Endothelial cell of umbilical vein (primary cell): ENCODE measurements at regions of chr6 and their contacts with region 1.

Region 1: DNA sequence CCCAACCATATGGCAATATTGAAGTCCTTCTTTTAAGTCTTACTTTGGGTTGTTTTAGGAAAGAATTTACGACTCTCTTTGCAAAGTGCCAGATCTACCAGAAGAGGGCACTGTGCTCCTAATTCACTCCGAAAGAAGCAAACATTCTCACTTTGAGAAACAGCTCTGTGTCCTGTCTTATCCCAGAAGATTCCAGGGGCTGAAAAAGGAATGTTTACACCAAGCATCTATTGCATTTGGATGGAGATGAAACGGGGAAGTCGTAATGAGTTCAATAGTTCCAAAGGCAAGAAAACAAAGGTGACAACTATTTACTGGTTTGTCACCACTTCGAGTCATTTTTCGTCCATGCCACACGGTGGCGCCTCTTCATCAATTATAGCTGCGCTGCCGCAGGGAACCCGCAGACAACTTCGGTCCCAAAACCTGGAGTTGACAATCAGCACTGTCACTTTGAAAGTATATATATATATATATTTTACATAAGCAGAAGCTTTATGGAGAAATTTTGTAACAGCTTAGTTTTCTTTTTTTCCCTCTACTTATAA is 121.6 kb downstream of the MOXD1 start:
- DNase-seq: peak; percentile 86
- H3K4me3 ChIP-seq: peak overlapping the region; percentile 8 to 59 (median 15)
- H3K27ac ChIP-seq: no peak overlapping the region
- H3K4me1 ChIP-seq: no peaks in the 10 kb centered on the region
- H3K27me3 ChIP-seq: peaks cover 4 to 8% of the 10 kb centered on the region in 2 experiments
- CTCF ChIP-seq: peak; percentile 64 to 78
- POLR2A ChIP-seq: no peak

Region 2: DNA sequence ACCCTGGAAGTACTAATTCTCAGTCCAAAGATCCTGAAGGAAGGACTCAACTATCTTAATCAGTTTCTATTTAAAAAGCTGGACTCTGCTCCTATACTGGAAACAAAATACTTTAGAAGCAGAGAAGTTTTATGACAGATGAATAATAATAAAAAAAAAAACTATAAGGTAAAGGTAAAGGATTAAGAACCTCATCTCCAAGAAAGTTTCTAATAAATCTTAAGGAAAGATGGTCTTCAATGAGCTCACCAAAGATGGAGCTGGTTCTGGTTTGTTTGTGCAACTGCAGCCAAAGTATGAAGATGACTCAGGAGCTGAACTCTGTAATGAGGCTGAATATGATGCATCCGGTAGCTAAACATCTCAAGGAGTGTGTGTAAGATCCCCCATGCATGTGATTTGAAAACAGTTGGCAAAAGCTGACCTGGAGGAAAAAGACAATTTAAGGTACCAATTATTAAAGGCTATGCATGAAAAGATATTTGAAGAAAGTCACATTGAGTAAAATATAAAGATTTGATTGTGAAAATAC is 676.8 kb before region 1 on chr6:
- CTCF ChIA-PET with region 1: no interaction called
- POLR2A ChIA-PET with region 1: no interaction called
- dilution Hi-C with region 1: no loop called
- intact Hi-C with region 1: no loop called
- DNase-seq: no peak
- H3K4me3 ChIP-seq: no peak overlapping the region
- H3K27ac ChIP-seq: no peak overlapping the region
- H3K4me1 ChIP-seq: no peaks in the 10 kb centered on the region
- H3K27me3 ChIP-seq: no peaks in the 10 kb centered on the region
- CTCF ChIP-seq: no peak
- POLR2A ChIP-seq: no peak

Region 3: DNA sequence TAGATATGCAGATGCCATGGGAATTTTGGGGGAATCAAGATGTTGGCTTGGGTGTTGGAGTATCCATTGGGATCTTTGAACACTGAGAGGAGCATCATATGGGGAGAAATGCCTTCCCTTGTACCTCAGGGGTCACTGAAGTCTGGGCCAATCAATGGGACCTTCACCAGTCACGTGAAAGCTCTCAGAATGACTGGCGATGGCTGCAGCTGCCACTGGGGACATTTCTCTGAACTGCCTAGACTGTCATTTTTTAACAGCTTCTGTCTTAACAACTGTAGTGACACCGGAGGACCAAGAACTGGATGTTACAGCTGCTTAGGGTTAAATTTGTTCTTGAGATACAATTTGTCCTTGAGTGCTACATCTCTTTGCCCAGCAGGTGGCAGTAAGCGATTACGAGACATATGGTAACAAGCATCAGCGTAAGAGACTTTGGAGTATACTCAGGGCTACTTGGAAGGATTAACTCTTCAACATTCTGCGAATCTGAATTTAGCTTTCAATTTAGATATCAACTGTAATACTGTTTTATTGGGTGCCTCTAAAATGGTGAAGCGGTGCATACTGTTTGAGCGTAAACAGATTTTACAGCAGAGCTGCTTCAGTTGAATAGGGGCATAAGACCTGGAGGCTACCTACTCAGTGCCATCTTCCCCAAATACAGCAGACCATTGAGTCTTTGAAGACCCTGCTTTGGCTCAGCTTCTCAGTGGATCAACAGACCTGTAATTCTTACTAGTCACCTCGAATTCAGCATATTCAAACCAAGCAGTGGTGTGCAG is 364.5 kb before region 1 on chr6:
- CTCF ChIA-PET with region 1: interaction called, 54 read pairs
- POLR2A ChIA-PET with region 1: no interaction called
- dilution Hi-C with region 1: no loop called
- intact Hi-C with region 1: loop called (anchors 1 kb)
- DNase-seq: peak; percentile 79
- H3K4me3 ChIP-seq: no peak overlapping the region
- H3K27ac ChIP-seq: no peak overlapping the region
- H3K4me1 ChIP-seq: peaks cover 2% of the 10 kb centered on the region
- H3K27me3 ChIP-seq: peaks cover 0 to 3% of the 10 kb centered on the region in 2 experiments
- CTCF ChIP-seq: peak; percentile 73 to 76
- POLR2A ChIP-seq: no peak

Region 4: DNA sequence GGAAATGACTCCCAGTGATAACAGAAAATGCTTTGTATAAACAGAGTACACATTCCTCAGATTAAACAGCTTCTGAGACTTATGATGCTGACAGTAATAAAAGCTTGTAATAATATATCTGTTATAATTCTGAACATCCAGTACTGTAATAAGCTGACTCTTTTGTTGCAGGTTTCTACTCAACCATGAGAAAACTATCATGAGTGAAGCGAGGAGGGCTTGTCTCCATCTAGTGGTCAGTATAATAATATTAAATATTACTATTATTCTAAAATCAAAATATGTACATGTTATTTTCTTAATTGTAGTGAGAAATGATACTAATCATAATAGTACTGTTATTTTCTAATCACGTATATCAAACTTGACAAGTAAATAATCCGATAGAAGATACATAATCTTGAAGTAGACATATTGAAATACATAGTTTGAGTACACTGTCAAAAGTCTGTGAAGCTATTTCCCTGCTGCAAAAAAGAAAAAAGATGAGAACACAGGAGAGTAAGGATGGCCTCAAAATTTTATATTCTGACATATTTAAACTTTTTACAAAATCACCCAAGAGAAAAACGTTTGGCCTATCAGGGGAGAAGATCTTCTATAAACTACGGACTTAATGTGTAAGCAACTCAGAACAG is 61.5 kb before region 1 on chr6:
- CTCF ChIA-PET with region 1: interaction called, 16 read pairs
- POLR2A ChIA-PET with region 1: no interaction called
- dilution Hi-C with region 1: no loop called
- intact Hi-C with region 1: no loop called
- DNase-seq: peak; percentile 63
- H3K4me3 ChIP-seq: no peak overlapping the region
- H3K27ac ChIP-seq: no peak overlapping the region
- H3K4me1 ChIP-seq: peaks cover 5% of the 10 kb centered on the region
- H3K27me3 ChIP-seq: no peaks in the 10 kb centered on the region
- CTCF ChIP-seq: peak in 1 of 2 donors; percentile 25
- POLR2A ChIP-seq: no peak

Region 5: DNA sequence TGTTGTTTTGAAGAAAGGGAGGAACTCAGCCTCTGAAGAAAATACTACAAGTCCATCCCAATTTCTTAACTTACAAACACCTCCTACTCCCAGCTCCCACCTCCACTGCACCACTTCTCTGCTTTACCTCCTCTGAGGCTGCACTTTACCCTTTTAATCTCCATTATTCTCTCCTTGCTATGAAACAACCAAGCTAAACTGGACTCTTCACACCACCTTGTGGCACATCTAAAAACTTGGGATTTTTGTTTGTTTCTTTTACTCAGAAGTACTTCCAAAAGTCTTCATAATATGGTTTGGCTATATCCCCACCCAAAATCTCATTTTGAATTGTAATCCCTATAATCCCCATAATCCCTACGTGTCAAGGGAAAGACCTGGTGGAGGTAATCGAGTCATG is 20.6 kb before region 1 on chr6:
- CTCF ChIA-PET with region 1: interaction called, 69 read pairs
- POLR2A ChIA-PET with region 1: no interaction called
- dilution Hi-C with region 1: no loop called
- intact Hi-C with region 1: no loop called
- DNase-seq: peak; percentile 60
- H3K4me3 ChIP-seq: no peak overlapping the region
- H3K27ac ChIP-seq: no peak overlapping the region
- H3K4me1 ChIP-seq: no peaks in the 10 kb centered on the region
- H3K27me3 ChIP-seq: no peaks in the 10 kb centered on the region
- CTCF ChIP-seq: peak; percentile 35 to 36
- POLR2A ChIP-seq: no peak

Region 6: DNA sequence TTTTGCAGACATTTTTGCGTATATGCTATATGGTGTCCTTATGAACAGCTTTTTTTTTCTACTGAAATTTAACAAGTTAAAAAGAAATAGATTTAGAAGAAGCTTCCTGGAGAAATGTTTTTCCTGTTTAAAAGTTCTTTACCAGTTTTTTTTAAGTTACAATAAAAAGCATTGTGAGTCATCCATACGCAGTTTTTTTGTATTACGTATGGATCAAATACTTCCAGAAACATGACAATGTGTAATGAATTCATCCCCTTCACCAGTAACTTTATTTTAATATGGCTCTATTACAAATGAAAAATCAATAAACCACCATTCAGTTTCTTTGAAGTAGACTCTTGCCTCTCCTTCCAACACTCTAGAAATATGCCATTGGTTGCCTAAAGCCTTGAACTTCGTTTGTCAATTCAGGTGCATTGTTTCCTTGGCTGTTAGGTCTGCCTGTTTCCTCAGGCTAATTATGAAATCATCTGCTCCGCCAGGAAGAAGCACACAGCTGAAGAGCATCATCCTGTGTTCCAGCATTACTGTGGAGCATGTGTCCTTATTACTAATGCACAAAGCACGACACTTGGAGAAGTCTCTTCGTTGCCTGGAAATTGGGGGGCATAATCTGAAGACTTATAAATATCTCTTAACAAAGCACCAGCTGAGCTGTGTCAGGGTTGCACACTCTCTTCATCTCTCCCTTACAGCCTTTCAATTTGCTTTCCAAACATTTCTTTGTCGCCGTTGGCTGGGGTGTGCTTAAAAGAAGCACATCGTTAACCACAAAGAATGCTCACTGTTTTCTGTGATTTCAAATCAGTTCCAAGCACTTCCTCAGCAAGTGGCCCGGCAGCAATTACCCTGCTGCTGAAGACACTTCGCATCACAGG is 112.0 kb after region 1 on chr6:
- CTCF ChIA-PET with region 1: interaction called, 34 read pairs
- POLR2A ChIA-PET with region 1: no interaction called
- dilution Hi-C with region 1: no loop called
- intact Hi-C with region 1: loop called (anchors 1 kb)
- DNase-seq: no peak
- H3K4me3 ChIP-seq: no peak overlapping the region
- H3K27ac ChIP-seq: no peak overlapping the region
- H3K4me1 ChIP-seq: no peaks in the 10 kb centered on the region
- H3K27me3 ChIP-seq: peaks cover 3 to 21% of the 10 kb centered on the region in 2 experiments
- CTCF ChIP-seq: no peak
- POLR2A ChIP-seq: no peak

Region 7: GRCh38 chr6:132471788-132472187 is 192.1 kb after region 1 on chr6:
- CTCF ChIA-PET with region 1: interaction called, 15 read pairs
- POLR2A ChIA-PET with region 1: no interaction called
- dilution Hi-C with region 1: no loop called
- intact Hi-C with region 1: no loop called
- DNase-seq: no peak
- H3K4me3 ChIP-seq: no peak overlapping the region
- H3K27ac ChIP-seq: no peak overlapping the region
- H3K4me1 ChIP-seq: peaks cover 4% of the 10 kb centered on the region
- H3K27me3 ChIP-seq: no peaks in the 10 kb centered on the region
- CTCF ChIP-seq: no peak
- POLR2A ChIP-seq: no peak

Region 8: GRCh38 chr6:132512638-132513632 is 233.3 kb after region 1 on chr6 and contains the start of gene STX7:
- CTCF ChIA-PET with region 1: interaction called, 19 read pairs
- POLR2A ChIA-PET with region 1: no interaction called
- dilution Hi-C with region 1: no loop called
- intact Hi-C with region 1: no loop called
- DNase-seq: peak; percentile 92
- H3K4me3 ChIP-seq: peak within 1 kb of the TSS; percentile 73 to 99 (median 98)
- H3K27ac ChIP-seq: peak within 1 kb of the TSS; percentile 63
- H3K4me1 ChIP-seq: peaks cover 26% of the 10 kb centered on the region
- H3K27me3 ChIP-seq: peaks cover 6 to 23% of the 10 kb centered on the region in 2 experiments
- CTCF ChIP-seq: no peak
- POLR2A ChIP-seq: peak; percentile 93
- total RNA-seq, gene STX7: 42.5 and 45.5 TPM in 2 replicates

Region 9: DNA sequence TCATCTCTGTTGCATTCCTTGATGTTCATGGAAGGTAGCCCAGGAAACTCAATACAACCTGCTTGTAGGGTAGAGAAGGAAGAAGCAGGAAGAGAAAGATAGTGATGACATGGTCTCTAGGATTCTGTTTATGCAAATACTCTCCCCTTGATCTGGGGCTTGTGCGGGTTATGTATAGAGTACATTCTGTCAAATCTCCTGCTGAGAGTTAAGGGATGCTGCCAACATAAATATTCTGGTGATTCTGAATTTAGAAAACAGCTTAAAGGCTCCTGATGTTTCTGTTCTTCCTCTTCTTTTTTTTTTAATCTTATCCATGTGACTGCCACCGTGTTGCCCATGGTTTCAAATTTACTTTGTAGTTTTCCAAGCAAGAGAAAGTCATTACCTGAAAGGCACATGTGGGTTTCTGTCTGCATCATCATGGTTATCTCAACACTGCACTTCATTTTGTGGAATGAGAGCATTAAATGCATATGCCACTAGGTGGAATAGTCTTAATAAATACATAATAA is 685.3 kb after region 1 on chr6:
- CTCF ChIA-PET with region 1: no interaction called
- POLR2A ChIA-PET with region 1: no interaction called
- dilution Hi-C with region 1: no loop called
- intact Hi-C with region 1: no loop called
- DNase-seq: peak; percentile 69
- H3K4me3 ChIP-seq: no peak overlapping the region
- H3K27ac ChIP-seq: no peak overlapping the region
- H3K4me1 ChIP-seq: peaks cover 20% of the 10 kb centered on the region
- H3K27me3 ChIP-seq: peaks cover 0 to 4% of the 10 kb centered on the region in 2 experiments
- CTCF ChIP-seq: no peak
- POLR2A ChIP-seq: no peak